ENCODE measurements at regions of chr17 and their contacts with region 1.

Region 1: GRCh38 chr17:30961209-30962188 is 9.3 kb upstream of the RNF135 start:
- DNase-seq: peak; percentile 53
- ATAC-seq: peak; percentile 72
- H3K4me3 Mint-ChIP-seq: peak overlapping the region; percentile 78
- H3K27ac Mint-ChIP-seq: peak overlapping the region; percentile 88
- H3K4me1 Mint-ChIP-seq: peaks cover 72% of the 10 kb centered on the region
- H3K27me3 Mint-ChIP-seq: no peaks in the 10 kb centered on the region
- CTCF ChIP-seq: no peak

Region 2: DNA sequence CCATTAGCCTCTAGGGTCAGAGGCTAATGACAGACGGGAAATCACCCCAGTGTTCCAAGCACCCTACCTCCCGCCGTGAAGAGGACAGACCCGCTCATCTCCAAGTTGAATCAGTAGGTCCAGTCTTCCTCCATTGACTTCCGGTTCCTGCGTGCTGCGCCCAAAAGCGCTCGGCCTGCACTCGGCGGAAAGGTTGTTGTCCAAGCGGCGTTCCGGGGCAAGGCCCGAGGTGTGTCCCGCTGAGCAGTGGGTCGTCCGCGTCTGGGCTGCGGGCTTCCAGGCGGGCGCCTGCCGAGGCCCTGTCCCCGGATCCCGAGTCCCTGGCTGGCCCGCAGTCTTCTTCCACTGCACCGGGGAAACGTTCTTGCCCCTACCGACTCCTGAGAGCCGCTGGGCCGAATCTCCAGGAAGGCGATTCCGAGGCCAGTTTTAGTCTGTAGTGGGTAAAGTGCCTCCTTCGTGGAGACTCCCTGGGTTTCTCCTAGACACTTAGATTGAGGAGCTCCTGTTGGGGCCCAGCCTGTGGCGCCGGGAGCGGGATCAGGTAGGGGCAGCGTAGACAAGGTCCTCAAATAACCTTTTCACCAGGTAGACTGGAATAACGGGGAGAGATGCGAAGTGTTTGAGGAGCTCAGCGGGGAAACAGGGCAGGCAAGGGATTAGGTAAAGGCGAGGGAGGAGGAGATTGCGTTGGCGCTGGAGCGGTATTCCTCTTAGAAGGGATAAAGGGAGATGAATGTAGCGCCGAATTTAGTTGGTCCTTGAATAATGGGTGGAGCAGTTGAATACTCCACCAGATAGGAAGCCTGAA is 55.2 kb before region 1 on chr17 and contains the start of gene TEFM:
- CTCF ChIA-PET with region 1: no interaction called
- POLR2A ChIA-PET with region 1: interaction called, 5 read pairs
- intact Hi-C with region 1: loop called (anchors 2 kb)
- DNase-seq: peak; percentile 90
- ATAC-seq: peak; percentile 98
- H3K4me3 Mint-ChIP-seq: peak within 1 kb of the TSS; percentile 95
- H3K27ac Mint-ChIP-seq: peak within 1 kb of the TSS; percentile 93
- H3K4me1 Mint-ChIP-seq: peaks cover 42% of the 10 kb centered on the region
- H3K27me3 Mint-ChIP-seq: no peaks in the 10 kb centered on the region
- CTCF ChIP-seq: no peak
- total RNA-seq, gene TEFM: 23.0 and 25.2 TPM in 2 replicates

Measured in activated B cell treated with CpG ODN at 0.5 μM for 24 hours (primary cell).